ENCODE measurements at regions of chr1 and their contacts with region 1.

Region 1: GRCh38 chr1:15206418-15207030 is 40.5 kb upstream of the FHAD1 start:
- DNase-seq: no peak
- ATAC-seq: peak in 3 of 4 donors; percentile 19 to 27 (median 24)
- H3K4me3 ChIP-seq: peak overlapping the region in 1 of 4 donors; percentile 18
- H3K27ac ChIP-seq: peak overlapping the region; percentile 2 to 75 (median 52)
- H3K4me1 ChIP-seq: peaks cover 45 to 86% (median 65%) of the 10 kb centered on the region in 3 donors
- H3K27me3 ChIP-seq: no peaks in the 10 kb centered on the region
- CTCF ChIP-seq: no peak

Region 2: GRCh38 chr1:14465996-14466395 is 740.5 kb before region 1 on chr1:
- intact Hi-C with region 1: no loop called
- DNase-seq: no peak
- ATAC-seq: no peak
- H3K4me3 ChIP-seq: no peak overlapping the region
- H3K27ac ChIP-seq: no peak overlapping the region
- H3K4me1 ChIP-seq: no peaks in the 10 kb centered on the region
- H3K27me3 ChIP-seq: no peaks in the 10 kb centered on the region
- CTCF ChIP-seq: no peak

Region 3: DNA sequence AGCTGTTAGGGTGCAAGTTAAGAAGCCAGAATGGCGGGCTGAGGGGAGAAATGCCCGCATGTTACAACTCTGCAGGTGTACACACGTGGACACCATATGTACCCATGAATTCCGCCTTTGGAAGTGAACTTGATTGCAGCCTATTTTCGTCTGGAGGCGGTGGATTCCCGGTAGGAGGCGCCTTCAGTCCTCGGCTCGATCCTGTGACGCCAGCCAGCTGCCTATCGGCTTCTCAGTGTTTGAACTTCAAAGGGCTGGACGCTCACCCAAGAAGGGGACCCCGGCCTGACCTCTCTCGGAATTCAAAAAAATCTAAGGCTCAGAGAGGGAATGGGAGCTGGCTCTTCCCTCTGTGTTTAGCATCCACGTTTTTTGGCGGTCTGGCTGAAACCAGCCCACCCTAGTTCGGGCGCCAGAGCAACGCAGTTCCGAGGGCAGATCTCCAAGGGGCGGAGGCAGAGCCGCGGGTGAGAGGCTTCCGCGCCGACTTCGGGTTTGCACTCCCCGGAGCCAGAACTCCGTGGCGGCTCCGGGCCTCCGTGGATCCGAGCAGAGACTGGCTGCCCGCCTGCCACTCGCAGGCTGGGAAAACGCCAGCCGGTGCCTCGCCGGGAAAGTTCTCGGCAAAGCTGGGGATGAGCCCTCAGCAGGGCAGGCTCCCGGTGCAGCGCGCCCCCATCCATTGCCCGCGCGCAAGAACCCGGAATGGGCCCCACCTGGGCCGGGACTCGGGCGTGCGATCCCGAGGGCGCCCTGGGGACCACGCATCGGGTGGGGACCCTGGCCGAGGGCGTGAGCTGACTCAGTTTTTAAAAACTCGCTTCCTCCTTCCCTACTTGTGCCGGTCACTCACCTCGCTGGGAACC is 54.0 kb before region 1 on chr1:
- intact Hi-C with region 1: loop called in 1 of 3 experiments (anchors 5 kb)
- DNase-seq: peak; percentile 88 to 95 (median 92)
- ATAC-seq: peak; percentile 58 to 74 (median 67)
- H3K4me3 ChIP-seq: peak overlapping the region; percentile 72 to 97 (median 88)
- H3K27ac ChIP-seq: peak overlapping the region; percentile 95 to 100 (median 99)
- H3K4me1 ChIP-seq: peaks cover 20 to 46% (median 20%) of the 10 kb centered on the region in 3 donors
- H3K27me3 ChIP-seq: no peaks in the 10 kb centered on the region
- CTCF ChIP-seq: peak in 3 of 4 donors; percentile 14 to 52 (median 32)

Measured in pancreas (tissue), 10 donors.